ENCODE measurements at regions of chr9 and their contacts with region 1.

Region 1: DNA sequence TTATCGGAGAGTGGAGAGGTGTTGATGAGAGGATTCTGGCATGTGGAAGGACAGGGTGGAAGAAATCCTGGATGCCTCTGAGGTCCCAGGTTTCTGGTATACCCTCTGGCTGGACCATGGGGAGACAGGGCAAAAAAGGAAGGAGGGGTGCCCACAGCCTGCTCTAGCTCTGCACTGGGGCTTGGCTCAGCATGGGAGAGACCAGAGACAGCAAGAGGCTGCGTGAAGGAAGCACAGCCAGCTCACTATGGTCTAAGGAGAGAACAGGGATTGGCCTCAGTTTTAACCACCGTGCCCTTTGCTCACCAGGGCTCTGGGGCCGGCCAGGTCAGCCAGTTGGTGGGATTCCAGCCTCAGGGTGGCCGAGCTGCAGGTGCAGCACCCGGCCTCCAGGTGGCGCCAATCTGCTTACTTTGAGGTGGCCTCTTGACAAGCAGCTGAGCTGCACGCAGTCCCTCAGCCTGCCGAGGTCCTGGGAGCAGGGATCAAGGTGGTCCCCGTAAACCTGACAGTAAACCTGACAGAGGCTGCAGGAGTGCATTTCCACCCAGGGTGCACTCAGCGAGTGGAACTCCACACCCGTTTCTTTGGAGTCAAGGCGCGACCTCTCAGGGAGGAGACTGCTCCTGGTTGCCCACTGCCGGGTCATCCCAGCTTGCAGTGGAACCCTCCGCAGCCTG is 25.0 kb upstream of the SPTLC1 start:
- DNase-seq: peak; percentile 73
- H3K4me3 Mint-ChIP-seq: no peak overlapping the region
- H3K27ac Mint-ChIP-seq: no peak overlapping the region
- H3K4me1 Mint-ChIP-seq: peaks cover 9% of the 10 kb centered on the region
- H3K27me3 Mint-ChIP-seq: peaks cover 33% of the 10 kb centered on the region

Region 2: DNA sequence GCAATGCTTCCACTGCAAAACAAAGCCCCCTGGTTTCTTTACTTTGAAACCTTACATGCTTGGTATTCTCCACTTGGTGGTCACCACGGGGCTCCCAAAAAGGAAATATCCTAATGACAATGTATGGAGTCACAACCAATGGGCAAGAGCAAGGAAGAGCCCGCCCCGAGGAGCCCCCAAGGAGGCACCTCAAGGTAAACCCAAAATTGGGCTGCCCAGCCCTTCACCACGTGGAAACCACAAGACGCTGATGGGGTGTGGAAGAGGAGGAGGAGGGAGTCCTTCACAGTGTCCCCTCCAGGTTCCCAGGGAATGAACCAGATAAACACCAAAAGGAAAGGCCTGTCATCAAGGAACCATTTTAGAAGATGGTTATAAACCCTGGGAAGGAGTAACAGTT is 194.0 kb before region 1 on chr9:
- CTCF ChIA-PET with region 1: no interaction called
- POLR2A ChIA-PET with region 1: no interaction called
- DNase-seq: no peak
- H3K4me3 Mint-ChIP-seq: no peak overlapping the region
- H3K27ac Mint-ChIP-seq: no peak overlapping the region
- H3K4me1 Mint-ChIP-seq: peaks cover 13% of the 10 kb centered on the region
- H3K27me3 Mint-ChIP-seq: peaks cover 62% of the 10 kb centered on the region

Region 3: GRCh38 chr9:92176068-92176799 is 36.0 kb after region 1 on chr9:
- CTCF ChIA-PET with region 1: interaction called, 15 read pairs
- POLR2A ChIA-PET with region 1: no interaction called
- DNase-seq: no peak
- H3K4me3 Mint-ChIP-seq: no peak overlapping the region
- H3K27ac Mint-ChIP-seq: no peak overlapping the region
- H3K4me1 Mint-ChIP-seq: no peaks in the 10 kb centered on the region
- H3K27me3 Mint-ChIP-seq: peaks cover 8% of the 10 kb centered on the region

Region 4: GRCh38 chr9:92325269-92325990 is 185.2 kb after region 1 on chr9 and contains the starts of genes CENPP and NOL8:
- CTCF ChIA-PET with region 1: interaction called, 16 read pairs
- POLR2A ChIA-PET with region 1: interaction called, 3 read pairs
- DNase-seq: peak; percentile 88
- H3K4me3 Mint-ChIP-seq: peak within 1 kb of the TSS; percentile 98
- H3K27ac Mint-ChIP-seq: peak within 1 kb of the TSS; percentile 94
- H3K4me1 Mint-ChIP-seq: peaks cover 39% of the 10 kb centered on the region
- H3K27me3 Mint-ChIP-seq: no peaks in the 10 kb centered on the region
- total RNA-seq, gene CENPP: 18.8 to 22.0 TPM
- total RNA-seq, gene NOL8: 48.0 to 48.9 TPM

Region 5: GRCh38 chr9:92634712-92635605 is 494.7 kb after region 1 on chr9:
- CTCF ChIA-PET with region 1: interaction called, 19 read pairs
- POLR2A ChIA-PET with region 1: interaction called, 3 read pairs
- DNase-seq: peak; percentile 74
- H3K4me3 Mint-ChIP-seq: no peak overlapping the region
- H3K27ac Mint-ChIP-seq: no peak overlapping the region
- H3K4me1 Mint-ChIP-seq: peaks cover 6% of the 10 kb centered on the region
- H3K27me3 Mint-ChIP-seq: no peaks in the 10 kb centered on the region